ENCODE measurements at regions of chr11 and their contacts with region 1.

Region 1: DNA sequence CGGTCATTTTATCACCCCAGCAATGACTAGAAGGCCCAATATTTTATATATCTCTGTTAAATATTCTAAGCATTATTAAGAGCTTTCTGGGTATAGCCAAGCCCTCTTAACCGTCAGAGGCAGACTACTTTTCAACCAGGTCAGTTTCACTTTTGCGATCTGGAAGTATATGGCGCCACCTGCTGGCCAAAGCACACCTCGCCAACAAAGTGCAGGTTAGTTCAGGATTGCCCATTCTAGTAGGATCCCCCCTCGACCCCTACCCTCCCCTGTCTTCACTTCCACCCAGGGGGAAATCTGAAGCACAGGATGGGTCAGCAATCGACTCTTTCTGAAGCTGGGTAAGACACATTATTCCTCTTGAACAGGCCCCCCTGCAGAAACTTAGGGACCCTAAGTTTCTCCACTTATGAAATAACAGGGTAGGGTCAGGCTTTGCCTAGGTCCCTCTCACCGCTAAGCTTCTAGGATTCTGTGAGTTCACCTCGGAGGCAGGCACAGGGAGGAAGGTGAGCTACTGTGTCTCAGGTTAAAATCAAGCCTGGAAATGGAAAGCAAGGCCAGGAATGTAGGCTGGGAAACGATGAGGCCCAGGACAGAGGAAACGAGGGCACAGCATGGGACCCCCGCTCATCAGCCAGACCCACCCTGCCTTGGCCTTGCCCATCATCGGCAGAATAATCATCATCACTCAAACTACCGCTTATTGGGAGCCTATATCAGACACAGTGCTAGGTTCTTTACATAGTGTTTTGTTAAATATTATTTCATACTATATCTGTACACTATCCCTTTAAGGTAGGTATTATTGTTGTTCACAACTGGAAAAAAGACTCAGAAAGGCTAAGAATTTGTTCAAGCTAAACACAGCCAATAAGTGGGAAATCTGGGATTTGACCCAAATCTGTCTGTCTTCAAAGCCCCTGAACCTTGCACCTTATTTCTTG is 35.6 kb downstream of the KCNJ1 start:
- DNase-seq: peak; percentile 96
- H3K4me3 Mint-ChIP-seq: peak overlapping the region; percentile 8
- H3K27ac Mint-ChIP-seq: peak overlapping the region; percentile 85
- H3K4me1 Mint-ChIP-seq: peaks cover 17% of the 10 kb centered on the region
- H3K27me3 Mint-ChIP-seq: no peaks in the 10 kb centered on the region

Region 2: GRCh38 chr11:128039140-128040021 is 792.1 kb before region 1 on chr11:
- CTCF ChIA-PET with region 1: no interaction called
- intact Hi-C with region 1: loop called (anchors 1 kb)
- DNase-seq: peak; percentile 89
- H3K4me3 Mint-ChIP-seq: peak overlapping the region; percentile 40
- H3K27ac Mint-ChIP-seq: peak overlapping the region; percentile 92
- H3K4me1 Mint-ChIP-seq: peaks cover 47% of the 10 kb centered on the region
- H3K27me3 Mint-ChIP-seq: no peaks in the 10 kb centered on the region

Region 3: DNA sequence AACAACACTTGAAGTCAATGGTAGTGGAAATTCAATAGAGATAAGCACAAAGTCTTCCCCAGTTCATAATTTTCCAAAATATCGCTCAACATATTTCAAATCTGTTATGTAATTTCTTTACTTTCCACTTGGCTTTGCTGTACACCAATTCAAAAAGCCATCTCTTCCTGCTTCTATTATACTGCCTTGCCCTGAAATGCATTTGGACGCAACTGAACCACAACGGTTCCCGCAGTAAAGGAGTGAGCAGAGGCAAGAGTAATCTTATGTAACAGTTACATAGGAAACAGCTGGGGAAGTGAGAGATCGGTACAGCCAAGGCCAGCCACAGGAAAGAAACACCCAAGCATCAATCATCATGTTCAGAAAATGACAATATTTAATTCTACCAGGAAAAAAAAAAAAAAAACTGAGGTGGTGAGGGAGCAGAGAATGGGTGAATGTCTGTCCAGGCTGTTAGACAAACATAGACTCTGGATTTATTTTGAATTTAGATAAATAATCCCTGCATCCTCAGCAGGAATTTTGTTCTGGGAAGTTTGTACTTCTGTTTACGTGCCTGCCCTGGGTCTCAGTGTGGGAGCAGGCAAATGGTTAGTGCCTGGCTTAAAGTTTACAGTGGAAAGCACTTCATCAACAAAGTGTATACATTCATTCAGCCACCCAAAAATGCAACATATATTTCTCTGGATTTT is 636.2 kb before region 1 on chr11:
- CTCF ChIA-PET with region 1: no interaction called
- intact Hi-C with region 1: loop called (anchors 1 kb)
- DNase-seq: peak; percentile 77
- H3K4me3 Mint-ChIP-seq: peak overlapping the region; percentile 6
- H3K27ac Mint-ChIP-seq: peak overlapping the region; percentile 32
- H3K4me1 Mint-ChIP-seq: peaks cover 42% of the 10 kb centered on the region
- H3K27me3 Mint-ChIP-seq: no peaks in the 10 kb centered on the region

Region 4: GRCh38 chr11:128465946-128466705 is 365.3 kb before region 1 on chr11:
- CTCF ChIA-PET with region 1: no interaction called
- intact Hi-C with region 1: loop called (anchors 2 kb)
- DNase-seq: peak; percentile 74
- H3K4me3 Mint-ChIP-seq: peak overlapping the region; percentile 74
- H3K27ac Mint-ChIP-seq: peak overlapping the region; percentile 97
- H3K4me1 Mint-ChIP-seq: peaks cover 94% of the 10 kb centered on the region
- H3K27me3 Mint-ChIP-seq: no peaks in the 10 kb centered on the region

Region 5: DNA sequence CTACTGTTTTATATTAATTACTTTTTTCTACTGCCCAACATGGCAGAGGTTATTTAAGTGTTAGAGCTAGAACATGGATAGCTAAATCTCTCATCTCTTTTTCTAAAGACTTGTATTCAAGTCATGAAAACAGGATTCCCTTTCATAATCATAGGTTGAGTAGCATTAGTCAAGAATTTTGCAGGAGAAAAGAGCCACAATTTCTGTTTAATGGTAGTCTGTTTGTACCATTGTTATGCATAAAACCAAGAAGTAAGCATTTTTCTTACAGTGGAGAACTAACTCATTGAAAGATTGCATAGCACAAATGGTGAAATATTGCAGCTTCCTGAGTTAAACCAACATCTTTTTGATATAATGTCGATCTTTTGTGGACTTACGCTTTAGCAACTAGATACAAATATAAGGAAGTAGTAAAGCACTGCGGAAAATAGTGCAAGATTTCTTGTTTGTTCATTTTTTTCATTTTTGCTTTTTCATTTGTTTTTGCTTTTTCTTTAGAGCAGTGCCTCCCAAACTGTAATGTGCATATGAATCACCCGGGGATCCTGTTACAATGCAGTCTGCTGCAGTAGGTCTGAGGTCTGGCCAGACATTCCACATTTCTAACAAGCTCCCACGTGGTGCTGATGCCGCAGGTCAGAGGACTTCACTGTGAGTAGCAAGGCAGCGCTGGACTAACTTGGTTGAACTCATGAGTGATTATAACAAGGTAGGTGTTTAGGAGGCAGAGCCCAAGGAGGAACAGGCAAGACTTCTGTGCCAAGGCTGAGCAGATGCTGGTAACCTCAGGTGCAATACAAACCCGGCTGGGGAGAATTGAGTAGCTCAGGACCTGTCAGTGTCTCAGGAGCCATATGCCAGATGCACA is 248.7 kb before region 1 on chr11:
- CTCF ChIA-PET with region 1: no interaction called
- intact Hi-C with region 1: no loop called
- DNase-seq: peak; percentile 50
- H3K4me3 Mint-ChIP-seq: peak overlapping the region; percentile 69
- H3K27ac Mint-ChIP-seq: peak overlapping the region; percentile 78
- H3K4me1 Mint-ChIP-seq: peaks cover 62% of the 10 kb centered on the region
- H3K27me3 Mint-ChIP-seq: no peaks in the 10 kb centered on the region

Region 6: DNA sequence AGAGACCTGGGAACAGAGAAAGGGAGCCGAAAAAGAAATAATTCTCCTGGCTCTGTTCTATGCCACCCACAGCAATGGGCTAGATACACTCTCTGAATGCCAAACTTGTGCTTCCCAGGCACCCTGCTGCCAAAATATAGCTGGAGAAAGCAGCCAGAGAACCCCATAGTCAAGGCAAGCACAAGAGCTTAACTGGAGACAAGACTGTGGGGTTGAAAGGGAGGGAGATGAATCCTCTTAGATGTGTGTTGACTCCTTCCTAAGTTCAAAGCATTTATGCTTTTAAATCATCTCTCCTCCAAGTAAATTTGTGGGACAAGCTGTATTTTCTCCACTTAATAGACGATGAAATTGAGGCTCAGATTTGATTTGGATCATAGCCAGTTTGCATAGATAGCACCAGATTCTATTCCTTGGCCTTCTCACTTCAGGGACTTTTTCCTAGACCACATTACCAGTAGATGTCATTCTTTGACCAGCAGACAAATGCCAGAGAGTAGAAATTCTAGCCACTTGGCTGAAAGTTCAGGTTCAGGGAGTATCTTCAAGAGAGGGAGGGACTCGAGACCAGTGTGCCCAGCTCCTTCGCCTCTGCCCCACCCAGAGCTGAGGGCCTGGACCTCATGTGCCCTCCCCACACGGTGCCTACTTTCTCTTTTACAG is 227.6 kb before region 1 on chr11:
- CTCF ChIA-PET with region 1: interaction called, 5 read pairs
- intact Hi-C with region 1: loop called (anchors 1 kb)
- DNase-seq: no peak
- H3K4me3 Mint-ChIP-seq: no peak overlapping the region
- H3K27ac Mint-ChIP-seq: no peak overlapping the region
- H3K4me1 Mint-ChIP-seq: peaks cover 59% of the 10 kb centered on the region
- H3K27me3 Mint-ChIP-seq: no peaks in the 10 kb centered on the region

Region 7: GRCh38 chr11:128841461-128842072 is 10.1 kb after region 1 on chr11:
- CTCF ChIA-PET with region 1: interaction called, 30 read pairs
- intact Hi-C with region 1: no loop called
- DNase-seq: no peak
- H3K4me3 Mint-ChIP-seq: no peak overlapping the region
- H3K27ac Mint-ChIP-seq: no peak overlapping the region
- H3K4me1 Mint-ChIP-seq: peaks cover 41% of the 10 kb centered on the region
- H3K27me3 Mint-ChIP-seq: no peaks in the 10 kb centered on the region

Region 8: GRCh38 chr11:129089279-129089678 is 257.8 kb after region 1 on chr11:
- CTCF ChIA-PET with region 1: no interaction called
- intact Hi-C with region 1: no loop called
- DNase-seq: no peak
- H3K4me3 Mint-ChIP-seq: no peak overlapping the region
- H3K27ac Mint-ChIP-seq: no peak overlapping the region
- H3K4me1 Mint-ChIP-seq: no peaks in the 10 kb centered on the region
- H3K27me3 Mint-ChIP-seq: no peaks in the 10 kb centered on the region